ENCODE measurements at regions of chr17 and their contacts with region 1.

Region 1: GRCh38 chr17:28750178-28751047 is 6.6 kb downstream of the TRAF4 start:
- DNase-seq: peak; percentile 82 to 96
- ATAC-seq: peak; percentile 57 to 72
- H3K4me3 ChIP-seq: no peak overlapping the region
- H3K27ac ChIP-seq: peak overlapping the region in 1 of 2 experiments; percentile 10; a peak in 1 of 6 replicates
- H3K4me1 ChIP-seq: peaks cover 50% of the 10 kb centered on the region
- CTCF ChIP-seq: peak; percentile 99
- EP300 ChIP-seq: no peak
- POLR2A ChIP-seq: no peak
- RAD21 ChIP-seq: peak; percentile 87 to 88

Region 2: GRCh38 chr17:28777178-28777577 is 26.8 kb after region 1 on chr17:
- CTCF ChIA-PET with region 1: interaction called, 11 read pairs
- POLR2A ChIA-PET with region 1: no interaction called
- DNase-seq: no peak
- ATAC-seq: peak; percentile 30 to 46; a peak in 3 of 6 replicates
- H3K4me3 ChIP-seq: no peak overlapping the region
- H3K27ac ChIP-seq: no peak overlapping the region
- H3K4me1 ChIP-seq: peaks cover 3% of the 10 kb centered on the region; the same call in 1 of the 3 replicates
- CTCF ChIP-seq: no peak
- EP300 ChIP-seq: no peak
- POLR2A ChIP-seq: no peak
- RAD21 ChIP-seq: no peak

Region 3: DNA sequence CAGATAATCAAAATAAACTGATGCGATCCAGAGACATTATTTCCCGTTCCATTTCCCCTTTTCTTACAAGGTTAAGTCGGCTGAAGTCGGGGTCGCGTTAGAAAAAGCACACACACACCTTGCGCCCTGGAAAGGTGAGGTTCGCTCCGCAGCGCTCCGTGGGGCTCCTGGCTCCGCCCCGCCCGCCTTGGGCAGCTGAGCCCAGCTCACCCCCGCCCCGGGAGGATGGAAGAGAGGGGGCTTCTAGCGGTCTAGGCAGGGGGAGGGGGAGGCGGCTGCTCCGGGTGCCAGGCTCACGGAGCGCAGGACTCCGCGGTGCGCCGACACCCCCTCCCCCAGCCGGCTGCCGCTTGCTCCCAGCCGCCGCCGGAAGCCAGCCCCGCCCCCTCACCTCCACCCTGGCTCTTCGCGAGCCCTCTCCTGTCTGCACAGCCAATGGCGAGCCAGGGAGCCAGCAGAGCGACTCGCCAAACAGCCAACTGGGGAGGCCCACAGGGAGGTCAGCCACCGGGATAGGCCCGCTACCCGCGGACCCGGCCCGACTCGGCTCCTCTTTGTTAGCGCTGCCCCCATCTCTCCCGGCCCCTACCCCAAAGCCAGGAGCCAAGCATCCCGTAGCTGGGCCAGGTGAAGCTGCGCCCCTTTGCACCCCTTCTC is 61.8 kb after region 1 on chr17:
- CTCF ChIA-PET with region 1: interaction called, 20 read pairs
- POLR2A ChIA-PET with region 1: no interaction called
- DNase-seq: peak; percentile 97 to 100
- ATAC-seq: peak; percentile 97 to 98
- H3K4me3 ChIP-seq: peak overlapping the region; percentile 73
- H3K27ac ChIP-seq: peak overlapping the region; percentile 89 to 94
- H3K4me1 ChIP-seq: peaks cover 46% of the 10 kb centered on the region
- CTCF ChIP-seq: no peak
- EP300 ChIP-seq: no peak
- POLR2A ChIP-seq: peak; percentile 54
- RAD21 ChIP-seq: no peak

Region 4: DNA sequence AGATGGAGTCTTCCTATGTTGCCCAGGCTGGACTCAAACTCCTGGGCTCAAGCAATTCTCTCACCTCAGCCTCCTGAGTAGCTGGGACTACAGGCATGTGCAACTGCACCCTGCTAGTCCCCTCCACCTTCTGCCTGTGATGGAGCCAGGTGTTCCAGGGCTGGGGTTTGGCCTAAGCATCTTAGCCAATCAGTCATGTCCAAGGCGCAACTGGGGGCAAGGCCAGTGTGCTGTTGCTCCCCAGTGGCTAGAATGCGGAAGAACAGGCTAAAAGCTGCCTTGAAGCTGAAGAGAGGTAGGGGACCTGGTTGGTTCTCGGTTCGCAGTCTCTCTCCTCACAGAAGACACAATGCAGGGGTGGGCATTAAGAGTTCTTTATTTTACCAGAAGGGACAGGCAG is 128.6 kb after region 1 on chr17:
- CTCF ChIA-PET with region 1: interaction called, 10 read pairs
- POLR2A ChIA-PET with region 1: no interaction called
- DNase-seq: peak; percentile 81 to 90
- ATAC-seq: peak; percentile 77 to 96
- H3K4me3 ChIP-seq: no peak overlapping the region
- H3K27ac ChIP-seq: no peak overlapping the region
- H3K4me1 ChIP-seq: no peaks in the 10 kb centered on the region
- CTCF ChIP-seq: peak; percentile 48
- EP300 ChIP-seq: no peak
- POLR2A ChIP-seq: no peak
- RAD21 ChIP-seq: peak; percentile 67 to 88

Region 5: GRCh38 chr17:28896884-28897768 is 146.7 kb after region 1 on chr17 and contains the start of gene FLOT2:
- CTCF ChIA-PET with region 1: interaction called, 20 read pairs
- POLR2A ChIA-PET with region 1: interaction called, 3 read pairs
- DNase-seq: peak; percentile 36 to 55
- ATAC-seq: peak; percentile 68 to 82
- H3K4me3 ChIP-seq: peak within 1 kb of the TSS; percentile 70
- H3K27ac ChIP-seq: peak within 1 kb of the TSS; percentile 87 to 97
- H3K4me1 ChIP-seq: peaks cover 23% of the 10 kb centered on the region
- CTCF ChIP-seq: peak; percentile 38; the same call in 1 of the 3 replicates
- EP300 ChIP-seq: no peak
- POLR2A ChIP-seq: peak; percentile 78; the same call in 1 of the 2 replicates
- RAD21 ChIP-seq: no peak
- polyA plus RNA-seq, gene FLOT2: 68.8 and 78.6 TPM in 2 replicates

Region 6: GRCh38 chr17:28902819-28903545 is 152.6 kb after region 1 on chr17 and contains the start of gene DHRS13:
- CTCF ChIA-PET with region 1: interaction called, 20 read pairs
- POLR2A ChIA-PET with region 1: interaction called, 3 read pairs
- DNase-seq: peak; percentile 97
- ATAC-seq: peak; percentile 91 to 94
- H3K4me3 ChIP-seq: peak within 1 kb of the TSS; percentile 87
- H3K27ac ChIP-seq: peak within 1 kb of the TSS; percentile 76 to 84
- H3K4me1 ChIP-seq: peaks cover 10% of the 10 kb centered on the region
- CTCF ChIP-seq: peak; percentile 100
- EP300 ChIP-seq: no peak
- POLR2A ChIP-seq: no peak
- RAD21 ChIP-seq: peak; percentile 63 to 70
- polyA plus RNA-seq, gene DHRS13: 7.0 and 7.3 TPM in 2 replicates